Caco-2 (cell line): ENCODE measurements at regions of chr9 and their contacts with region 1.

Region 1: DNA sequence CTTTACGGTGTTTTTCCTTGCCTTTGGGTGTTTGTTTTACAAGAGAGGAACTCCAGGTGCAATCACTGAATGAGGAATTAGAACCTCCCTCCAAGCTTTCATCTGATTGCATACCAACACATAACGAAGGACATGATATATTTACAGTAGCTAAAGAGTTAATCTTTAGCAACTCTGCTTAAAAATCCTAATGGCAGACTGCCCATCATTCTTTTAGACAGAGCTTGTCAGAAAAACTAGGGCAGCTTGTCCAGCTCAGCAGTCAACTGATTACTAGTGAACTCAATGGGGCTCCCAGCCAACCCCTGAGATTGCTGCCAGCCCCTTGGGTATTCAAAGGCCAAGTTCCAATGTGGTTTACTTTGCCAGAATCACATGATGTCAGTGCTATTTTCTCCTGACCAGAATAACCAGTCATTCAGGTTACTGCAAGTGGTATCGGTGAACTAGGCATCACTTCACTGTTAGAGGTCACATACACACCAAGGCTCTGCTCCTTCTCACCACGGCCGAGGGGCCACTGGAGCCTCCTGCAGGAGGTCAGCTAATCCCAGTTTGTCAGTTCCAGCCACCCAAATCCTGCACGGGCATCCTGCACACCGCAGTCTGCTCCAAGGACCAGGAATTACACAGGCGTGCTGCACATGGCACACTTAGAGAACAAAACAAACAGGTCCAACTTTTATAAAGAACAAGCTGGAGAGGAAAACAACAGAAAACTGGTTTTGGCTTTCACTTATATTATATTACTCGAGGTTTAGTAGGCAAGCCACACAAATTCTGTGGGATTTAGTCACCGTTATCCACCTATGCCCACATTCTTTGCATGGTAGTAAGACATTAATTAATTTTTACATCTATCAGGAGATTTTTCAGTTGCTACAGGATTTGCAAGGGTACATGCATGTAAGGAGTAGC is 62.5 kb downstream of the NFIB start:
- DNase-seq: peak; percentile 74 to 76
- H3K4me3 ChIP-seq: no peak overlapping the region
- H3K4me3 Mint-ChIP-seq: no peak overlapping the region
- H3K27ac Mint-ChIP-seq: no peak overlapping the region
- H3K4me1 ChIP-seq: peaks cover 15% of the 10 kb centered on the region
- H3K4me1 Mint-ChIP-seq: peaks cover 7% of the 10 kb centered on the region
- H3K27me3 ChIP-seq: no peaks in the 10 kb centered on the region
- H3K27me3 Mint-ChIP-seq: no peaks in the 10 kb centered on the region
- CTCF ChIP-seq: peak in 1 of 2 experiments; percentile 11

Region 2: DNA sequence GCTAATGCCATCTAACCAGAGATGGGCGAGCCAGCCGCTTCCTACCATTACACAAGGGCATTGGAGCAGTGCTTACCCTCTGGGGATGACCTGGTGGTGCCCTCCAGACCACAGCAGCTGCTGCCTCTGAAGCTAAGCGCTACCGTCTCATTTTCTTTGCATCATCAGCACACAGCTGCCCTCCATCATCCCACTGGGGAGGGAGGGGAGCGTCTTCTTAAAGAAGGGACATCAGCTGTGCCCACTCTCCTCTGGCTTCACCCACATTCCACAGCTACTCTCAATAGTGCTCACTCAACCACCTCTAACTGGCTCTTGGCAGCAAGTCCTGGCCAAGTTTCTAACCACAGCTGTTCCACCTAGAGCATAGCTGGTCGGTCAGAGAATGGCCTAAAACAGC is 440.9 kb before region 1 on chr9:
- CTCF ChIA-PET with region 1: no interaction called
- POLR2A ChIA-PET with region 1: no interaction called
- intact Hi-C with region 1: no loop called
- DNase-seq: no peak
- H3K4me3 ChIP-seq: no peak overlapping the region
- H3K4me3 Mint-ChIP-seq: no peak overlapping the region
- H3K27ac Mint-ChIP-seq: no peak overlapping the region
- H3K4me1 ChIP-seq: no peaks in the 10 kb centered on the region
- H3K4me1 Mint-ChIP-seq: no peaks in the 10 kb centered on the region
- H3K27me3 ChIP-seq: no peaks in the 10 kb centered on the region
- H3K27me3 Mint-ChIP-seq: no peaks in the 10 kb centered on the region
- CTCF ChIP-seq: no peak

Region 3: GRCh38 chr9:13991395-13991794 is 260.0 kb before region 1 on chr9:
- CTCF ChIA-PET with region 1: no interaction called
- POLR2A ChIA-PET with region 1: no interaction called
- intact Hi-C with region 1: no loop called
- DNase-seq: no peak
- H3K4me3 ChIP-seq: no peak overlapping the region
- H3K4me3 Mint-ChIP-seq: no peak overlapping the region
- H3K27ac Mint-ChIP-seq: no peak overlapping the region
- H3K4me1 ChIP-seq: no peaks in the 10 kb centered on the region
- H3K4me1 Mint-ChIP-seq: no peaks in the 10 kb centered on the region
- H3K27me3 ChIP-seq: no peaks in the 10 kb centered on the region
- H3K27me3 Mint-ChIP-seq: no peaks in the 10 kb centered on the region
- CTCF ChIP-seq: no peak

Region 4: DNA sequence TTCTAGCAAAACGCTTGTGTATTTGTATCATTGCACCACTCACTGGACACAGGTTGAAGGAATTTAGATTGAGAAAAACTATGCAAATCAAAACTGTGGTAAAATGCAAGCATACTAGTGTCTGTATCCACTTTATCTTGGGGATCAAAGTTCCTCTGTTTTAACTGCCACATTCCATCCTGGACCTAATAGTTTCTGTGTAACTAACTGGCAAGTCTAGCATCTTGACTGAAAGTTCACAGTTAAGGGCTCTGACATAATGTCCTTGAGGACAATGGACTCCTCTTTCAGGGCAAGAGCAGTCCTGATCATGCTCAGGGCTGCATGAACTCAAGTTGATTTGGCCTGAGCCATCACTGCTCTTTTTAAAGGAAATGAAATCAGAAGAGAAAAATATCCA is 31.9 kb after region 1 on chr9:
- CTCF ChIA-PET with region 1: no interaction called
- POLR2A ChIA-PET with region 1: no interaction called
- intact Hi-C with region 1: loop called (anchors 2 kb)
- DNase-seq: peak in 1 of 2 experiments; percentile 1
- H3K4me3 ChIP-seq: no peak overlapping the region
- H3K4me3 Mint-ChIP-seq: no peak overlapping the region
- H3K27ac Mint-ChIP-seq: no peak overlapping the region
- H3K4me1 ChIP-seq: peaks cover 11% of the 10 kb centered on the region; the same call in 1 of the 2 replicates
- H3K4me1 Mint-ChIP-seq: peaks cover 8% of the 10 kb centered on the region
- H3K27me3 ChIP-seq: no peaks in the 10 kb centered on the region
- H3K27me3 Mint-ChIP-seq: no peaks in the 10 kb centered on the region
- CTCF ChIP-seq: no peak

Region 5: DNA sequence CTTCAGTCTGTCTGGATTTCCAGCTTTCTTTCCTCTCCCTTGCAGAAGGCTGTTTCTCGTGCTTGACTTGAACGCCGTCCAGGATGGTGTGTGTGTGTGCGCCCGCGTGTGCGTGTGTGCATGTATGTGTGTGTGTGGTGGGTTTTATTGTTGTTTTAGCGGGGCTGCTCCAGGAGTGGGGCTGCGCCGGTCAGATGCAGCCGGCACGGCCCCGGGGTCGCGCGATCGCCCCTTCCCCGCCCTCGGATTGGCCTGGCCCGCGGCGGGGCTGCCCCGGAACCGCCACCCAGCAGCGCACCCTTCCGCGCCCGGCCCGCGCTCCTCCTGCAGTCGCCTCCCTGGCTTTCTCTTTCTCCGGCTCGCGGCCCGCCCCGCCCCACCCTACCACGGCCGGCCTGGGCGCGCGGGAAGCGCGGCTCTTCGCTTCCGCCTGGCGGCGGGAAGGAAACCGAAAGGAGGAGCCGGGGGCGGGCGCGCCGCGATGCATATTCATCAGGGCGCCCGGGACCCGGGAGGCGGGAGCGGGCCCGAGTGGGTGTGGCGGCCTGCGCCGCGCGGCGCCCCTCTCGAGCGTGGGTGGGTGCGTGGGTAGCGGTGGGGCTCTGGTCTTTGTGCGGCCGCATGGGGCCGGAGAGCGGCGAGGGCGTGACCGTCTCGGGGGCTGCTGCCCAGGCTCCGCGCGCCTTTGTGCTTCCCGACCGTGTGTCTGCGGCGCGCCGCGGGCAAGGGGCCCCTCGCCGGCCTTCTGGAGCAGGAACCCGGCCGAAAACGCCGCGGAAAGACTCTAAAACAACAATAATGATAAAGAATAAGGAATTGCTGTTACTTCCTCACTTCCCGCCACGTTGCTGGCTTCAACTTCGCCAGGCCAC is 71.0 kb after region 1 on chr9:
- CTCF ChIA-PET with region 1: no interaction called
- POLR2A ChIA-PET with region 1: no interaction called
- intact Hi-C with region 1: loop called (anchors 1 kb)
- DNase-seq: peak; percentile 76 to 85
- H3K4me3 ChIP-seq: peak overlapping the region; percentile 52
- H3K4me3 Mint-ChIP-seq: peak overlapping the region; percentile 69
- H3K27ac Mint-ChIP-seq: no peak overlapping the region
- H3K4me1 ChIP-seq: no peaks in the 10 kb centered on the region
- H3K4me1 Mint-ChIP-seq: no peaks in the 10 kb centered on the region
- H3K27me3 ChIP-seq: no peaks in the 10 kb centered on the region; the same call in 1 of the 2 replicates
- H3K27me3 Mint-ChIP-seq: peaks cover 14% of the 10 kb centered on the region
- CTCF ChIP-seq: peak in 1 of 2 experiments; percentile 25